Activated T-helper 1 cell treated with anti-CD3 and anti-CD28 coated beads, Interleukin-12 subunit alpha, Interleukin-12 subunit beta, Interleukin-2, Interleukin-4 antibody, amounts not matched to agents 30 ng/mL and 10 ng/mL and 1 ng/mL, durations not matched to agents 14 hours and 24 hours and 36 hours (primary cell): ENCODE measurements at regions of chr5 and their contacts with region 1.

Region 1: DNA sequence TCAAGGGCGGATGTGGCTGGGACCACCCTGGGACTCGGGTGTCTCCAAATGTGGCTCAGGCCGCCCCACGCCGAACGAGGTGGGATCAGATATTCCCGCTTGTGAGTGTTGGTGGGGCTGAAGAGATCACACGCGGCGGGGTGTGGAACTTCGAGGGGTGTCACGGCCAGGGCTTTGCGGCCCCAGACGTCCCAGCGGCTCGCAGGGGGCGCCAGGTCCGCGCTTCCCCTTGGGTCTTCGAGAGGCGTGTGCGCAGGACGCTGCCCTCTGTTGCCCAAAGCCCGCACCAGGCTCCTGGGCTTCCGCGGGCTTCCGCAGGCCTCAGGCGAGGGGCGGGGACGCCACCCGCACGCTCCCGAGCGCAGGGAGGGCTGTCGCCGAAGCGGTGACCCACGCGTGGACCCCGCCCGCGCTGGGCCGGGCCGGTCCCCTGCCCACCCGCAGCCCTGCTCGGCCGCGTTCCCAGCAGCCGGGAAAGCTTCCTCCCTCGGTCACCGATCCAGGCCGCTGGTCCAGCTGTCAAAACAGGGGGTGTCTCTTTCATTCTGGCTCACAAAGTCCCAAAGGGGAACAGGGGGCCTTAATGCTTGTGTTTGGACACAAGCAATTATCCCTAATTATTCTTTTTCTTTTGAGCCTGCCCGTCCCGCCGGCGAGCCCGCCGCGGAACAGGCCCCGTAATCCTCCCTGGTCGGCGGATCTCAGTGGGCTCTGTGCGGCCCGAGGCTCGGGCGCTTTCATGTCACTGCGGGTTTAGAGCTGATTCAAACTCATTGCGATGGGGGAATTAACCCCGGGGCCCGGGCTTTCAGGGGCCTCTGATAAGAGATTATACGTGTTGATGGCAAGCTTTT is 60.6 kb downstream of the TMEM174 start:
- DNase-seq: no peak
- H3K4me3 Mint-ChIP-seq: no peak overlapping the region
- H3K27ac Mint-ChIP-seq: no peak overlapping the region
- H3K4me1 Mint-ChIP-seq: peaks cover 11% of the 10 kb centered on the region
- H3K27me3 Mint-ChIP-seq: peaks cover 75% of the 10 kb centered on the region

Region 2: DNA sequence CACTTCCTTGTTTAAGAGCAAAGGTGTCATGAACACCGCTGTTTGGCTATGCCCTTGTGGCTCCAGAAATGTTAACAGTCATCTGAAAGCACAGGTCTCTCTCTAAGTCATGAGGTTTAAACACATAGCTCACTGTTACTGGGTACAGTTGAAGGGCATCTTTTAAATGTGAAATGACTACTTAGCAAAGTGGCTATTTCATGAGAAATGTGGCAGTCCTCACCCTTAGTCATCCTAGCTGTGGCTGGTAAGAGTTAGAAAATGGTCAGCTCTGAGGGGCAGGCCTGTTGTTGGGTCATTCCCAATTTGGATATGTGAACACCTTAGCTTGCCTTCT is 137.4 kb before region 1 on chr5:
- intact Hi-C with region 1: no loop called
- DNase-seq: no peak
- H3K4me3 Mint-ChIP-seq: no peak overlapping the region
- H3K27ac Mint-ChIP-seq: no peak overlapping the region
- H3K4me1 Mint-ChIP-seq: no peaks in the 10 kb centered on the region
- H3K27me3 Mint-ChIP-seq: peaks cover 7% of the 10 kb centered on the region

Region 3: DNA sequence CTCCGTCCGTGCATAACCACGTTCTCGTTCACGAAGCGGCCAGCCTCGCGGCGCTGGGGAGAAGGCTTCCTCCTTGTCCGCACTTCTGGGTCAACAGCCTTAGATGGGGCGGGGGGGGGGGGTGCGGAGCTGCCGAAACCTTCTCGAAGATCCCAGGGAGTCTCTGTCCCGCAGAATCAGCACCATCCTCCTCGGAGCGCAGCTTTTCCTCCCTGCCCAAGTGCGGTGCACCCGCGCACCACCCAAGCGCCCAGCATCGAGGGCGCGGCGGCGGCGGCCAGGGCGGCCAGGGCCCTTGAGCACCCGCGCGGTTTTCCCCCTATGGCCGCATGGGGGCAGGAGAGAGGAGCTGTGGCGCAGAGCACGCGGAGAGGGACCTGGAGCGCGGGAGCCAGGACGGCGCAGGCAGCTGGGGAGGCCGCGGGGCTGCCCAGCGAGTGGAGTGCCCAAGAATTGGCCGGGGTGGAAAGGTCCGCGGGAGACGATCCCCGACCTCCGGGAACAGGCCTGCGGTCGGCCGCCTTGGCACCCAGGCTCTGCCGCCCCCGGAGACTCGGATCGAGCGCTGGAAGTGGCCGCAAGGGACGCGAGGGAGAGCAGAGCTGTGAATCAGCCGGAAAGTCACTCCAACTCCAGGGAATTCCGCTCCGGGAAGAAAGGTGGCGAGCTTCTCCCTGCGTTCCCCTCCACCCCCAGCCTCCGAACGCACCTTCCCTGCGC is 17.5 kb before region 1 on chr5:
- intact Hi-C with region 1: loop called (anchors 1 kb)
- DNase-seq: peak; percentile 41
- H3K4me3 Mint-ChIP-seq: no peak overlapping the region
- H3K27ac Mint-ChIP-seq: no peak overlapping the region
- H3K4me1 Mint-ChIP-seq: peaks cover 6% of the 10 kb centered on the region
- H3K27me3 Mint-ChIP-seq: peaks cover 65% of the 10 kb centered on the region

Region 4: GRCh38 chr5:73298772-73299630 is 65.4 kb after region 1 on chr5:
- intact Hi-C with region 1: loop called (anchors 2 kb)
- DNase-seq: no peak
- H3K4me3 Mint-ChIP-seq: no peak overlapping the region
- H3K27ac Mint-ChIP-seq: peak overlapping the region; percentile 42
- H3K4me1 Mint-ChIP-seq: no peaks in the 10 kb centered on the region
- H3K27me3 Mint-ChIP-seq: peaks cover 81% of the 10 kb centered on the region

Region 5: DNA sequence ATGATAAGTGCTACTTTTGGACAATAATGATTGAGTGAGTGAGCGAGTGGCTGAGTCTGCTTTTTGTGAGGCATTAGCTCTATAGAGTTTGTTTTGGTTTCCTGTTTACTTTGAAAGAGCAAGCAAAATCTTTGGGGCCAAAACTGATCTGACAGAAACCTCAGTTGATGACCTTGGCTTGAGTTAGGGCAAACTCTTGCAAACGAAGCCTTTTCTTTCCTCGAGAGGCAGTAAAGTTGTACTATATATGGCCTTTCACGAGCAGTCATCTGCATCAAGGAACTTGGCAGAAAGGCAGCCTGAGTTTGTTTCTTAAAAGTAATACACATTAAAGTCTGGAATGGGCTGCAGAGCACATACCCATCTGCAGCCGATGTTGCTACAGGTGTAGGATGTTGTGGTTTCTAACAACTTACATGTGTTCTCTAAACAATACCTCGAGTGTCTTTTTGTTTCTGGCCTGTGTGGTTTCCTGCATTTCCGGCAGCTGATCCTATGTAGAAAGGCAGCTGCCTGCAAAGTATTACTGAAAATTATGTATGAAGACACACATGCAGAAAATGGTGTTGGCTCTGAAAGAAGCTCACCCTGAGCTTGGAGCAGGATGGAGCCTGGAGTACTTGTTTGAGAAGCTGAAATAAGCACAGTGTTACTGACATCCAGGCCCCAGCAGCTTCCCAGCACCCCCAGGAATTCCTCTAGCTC is 154.2 kb after region 1 on chr5:
- intact Hi-C with region 1: loop called (anchors 5 kb)
- DNase-seq: peak; percentile 57
- H3K4me3 Mint-ChIP-seq: peak overlapping the region; percentile 27
- H3K27ac Mint-ChIP-seq: no peak overlapping the region
- H3K4me1 Mint-ChIP-seq: peaks cover 27% of the 10 kb centered on the region
- H3K27me3 Mint-ChIP-seq: peaks cover 61% of the 10 kb centered on the region

Region 6: GRCh38 chr5:73454351-73455036 is 220.9 kb after region 1 on chr5:
- intact Hi-C with region 1: loop called (anchors 5 kb)
- DNase-seq: no peak
- H3K4me3 Mint-ChIP-seq: no peak overlapping the region
- H3K27ac Mint-ChIP-seq: no peak overlapping the region
- H3K4me1 Mint-ChIP-seq: peaks cover 7% of the 10 kb centered on the region
- H3K27me3 Mint-ChIP-seq: peaks cover 52% of the 10 kb centered on the region

Region 7: GRCh38 chr5:74161170-74161569 is 927.6 kb after region 1 on chr5:
- intact Hi-C with region 1: no loop called
- DNase-seq: no peak
- H3K4me3 Mint-ChIP-seq: no peak overlapping the region
- H3K27ac Mint-ChIP-seq: no peak overlapping the region
- H3K4me1 Mint-ChIP-seq: no peaks in the 10 kb centered on the region
- H3K27me3 Mint-ChIP-seq: peaks cover 7% of the 10 kb centered on the region